Naive thymus-derived CD8-positive, alpha-beta T cell (primary cell): ENCODE measurements at regions of chr19 and their contacts with region 1.

Region 1: DNA sequence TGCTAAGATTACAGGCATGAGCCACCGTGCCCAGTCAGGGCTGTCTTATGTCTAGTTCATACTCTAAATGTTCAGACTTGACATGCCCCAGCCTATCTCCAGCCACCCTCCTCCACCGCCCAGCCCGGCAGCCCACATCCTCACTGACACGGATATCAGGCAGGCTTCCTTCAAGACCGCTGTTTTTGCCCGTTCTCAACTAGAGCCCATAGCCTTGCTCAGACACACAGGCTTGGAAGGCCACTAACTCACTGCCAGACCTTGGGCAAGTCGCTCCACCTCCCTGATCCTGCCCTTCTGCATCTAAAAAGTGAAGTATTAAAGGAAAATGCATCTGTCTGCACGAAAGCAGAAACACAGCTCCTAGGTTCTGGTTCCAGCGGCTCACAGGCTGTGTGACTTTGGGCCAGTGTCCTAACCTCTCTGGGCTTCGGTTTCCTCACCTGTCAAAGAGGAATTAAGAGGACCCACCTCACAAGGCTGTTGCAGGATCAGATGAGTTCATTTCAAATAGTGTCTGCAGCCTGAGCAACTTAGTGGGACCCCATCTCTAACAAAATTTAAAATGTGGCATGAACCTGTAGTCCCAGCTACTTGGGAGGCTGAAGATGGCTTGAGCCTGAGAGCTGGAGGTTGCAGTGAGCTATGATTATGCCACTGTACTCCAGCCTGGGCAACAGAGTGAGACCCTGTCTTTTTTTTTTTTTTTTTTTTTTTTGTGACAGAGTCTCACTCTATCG is 14.5 kb upstream of the CERS4 start:
- DNase-seq: peak in 6 of 10 donors; percentile 33 to 44 (median 37)
- ATAC-seq: peak; percentile 52
- H3K4me3 Mint-ChIP-seq: peak overlapping the region; percentile 63 to 86 (median 80)
- H3K27ac Mint-ChIP-seq: peak overlapping the region; percentile 83 to 97 (median 92)
- H3K4me1 Mint-ChIP-seq: peaks cover 23 to 58% (median 51%) of the 10 kb centered on the region in 4 donors
- H3K27me3 Mint-ChIP-seq: no peaks in the 10 kb centered on the region

Region 2: GRCh38 chr19:8180061-8180460 is 14.6 kb before region 1 on chr19:
- POLR2A ChIA-PET with region 1: interaction called, 20 read pairs
- DNase-seq: no peak
- ATAC-seq: no peak
- H3K4me3 Mint-ChIP-seq: no peak overlapping the region
- H3K27ac Mint-ChIP-seq: no peak overlapping the region
- H3K4me1 Mint-ChIP-seq: peaks cover 0 to 17% (median 8%) of the 10 kb centered on the region in 4 donors
- H3K27me3 Mint-ChIP-seq: no peaks in the 10 kb centered on the region

Region 3: GRCh38 chr19:8208922-8209461 is 14.3 kb after region 1 on chr19 and contains the start of gene CERS4:
- POLR2A ChIA-PET with region 1: interaction called, 31 read pairs
- DNase-seq: peak in 7 of 10 donors; percentile 59 to 86 (median 79)
- ATAC-seq: peak; percentile 78 to 80
- H3K4me3 Mint-ChIP-seq: peak within 1 kb of the TSS; percentile 85 to 99 (median 90)
- H3K27ac Mint-ChIP-seq: peak within 1 kb of the TSS; percentile 85 to 97 (median 90)
- H3K4me1 Mint-ChIP-seq: peaks cover 19 to 34% (median 32%) of the 10 kb centered on the region in 4 donors
- H3K27me3 Mint-ChIP-seq: peaks cover 0 to 1% (median 0%) of the 10 kb centered on the region in 5 donors
- polyA plus RNA-seq, gene CERS4: 5.4 to 8.0 (median 7.9) TPM

Region 4: DNA sequence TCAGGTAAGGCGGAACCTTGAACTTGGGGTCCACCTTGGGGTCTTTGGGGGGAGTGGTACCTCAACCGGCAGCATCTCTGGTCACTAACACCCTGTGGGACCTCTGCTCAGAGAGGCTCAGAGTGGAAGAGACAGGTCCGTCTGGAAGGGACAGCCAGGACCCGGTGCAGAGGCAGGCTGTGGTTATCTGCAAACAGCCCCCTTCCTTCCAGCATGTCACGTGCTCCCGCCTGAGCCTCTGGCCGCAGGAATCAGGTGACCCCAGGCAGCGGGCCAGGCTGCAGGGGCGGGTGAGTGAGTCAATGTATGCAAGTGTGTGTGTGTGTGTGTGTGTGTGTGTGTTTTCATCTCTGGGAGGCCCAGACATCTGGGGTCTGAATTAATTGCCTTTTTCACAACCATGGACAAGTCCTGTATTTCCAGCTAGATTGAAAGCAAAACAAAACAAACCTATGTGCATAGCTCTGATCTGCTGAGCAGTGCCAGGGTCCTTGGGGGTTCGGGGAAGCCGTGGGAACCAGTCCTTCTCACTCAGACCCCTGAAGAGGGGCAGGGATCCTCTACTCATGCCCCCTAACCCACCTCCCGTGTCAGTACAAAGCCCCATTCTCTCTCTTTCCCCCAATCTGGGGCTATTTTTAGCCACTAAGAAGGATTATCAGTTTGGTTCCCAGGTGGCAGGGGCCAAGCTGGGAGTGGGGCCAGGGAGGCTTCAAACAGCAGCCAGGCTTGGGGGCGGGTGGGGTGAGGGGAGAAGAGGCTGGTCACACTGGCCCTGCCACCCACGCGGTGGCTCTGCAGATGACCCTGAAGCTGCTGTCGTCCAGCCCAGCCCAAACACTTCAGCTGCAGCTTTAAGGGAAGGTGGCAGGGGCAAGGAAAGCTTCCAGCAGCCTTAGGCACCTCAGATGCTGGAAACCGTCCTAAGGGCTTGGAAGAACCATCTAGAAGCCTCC is 45.9 kb after region 1 on chr19:
- POLR2A ChIA-PET with region 1: no interaction called
- DNase-seq: peak in 9 of 10 donors; percentile 12 to 77 (median 25)
- ATAC-seq: peak; percentile 58 to 65
- H3K4me3 Mint-ChIP-seq: peak overlapping the region in 9 of 10 donors; percentile 4 to 73 (median 55)
- H3K27ac Mint-ChIP-seq: peak overlapping the region; percentile 12 to 93 (median 76)
- H3K4me1 Mint-ChIP-seq: peaks cover 10 to 33% (median 22%) of the 10 kb centered on the region in 4 donors
- H3K27me3 Mint-ChIP-seq: no peaks in the 10 kb centered on the region

Region 5: GRCh38 chr19:8441725-8442544 is 247.2 kb after region 1 on chr19:
- POLR2A ChIA-PET with region 1: no interaction called
- DNase-seq: no peak
- ATAC-seq: no peak
- H3K4me3 Mint-ChIP-seq: peak overlapping the region in 6 of 10 donors; percentile 24 to 66 (median 42)
- H3K27ac Mint-ChIP-seq: peak overlapping the region in 6 of 10 donors; percentile 27 to 75 (median 36)
- H3K4me1 Mint-ChIP-seq: peaks cover 10 to 24% (median 20%) of the 10 kb centered on the region in 4 donors
- H3K27me3 Mint-ChIP-seq: no peaks in the 10 kb centered on the region